Sigmoid colon (tissue), 7 donors: ENCODE measurements at regions of chr18 and their contacts with region 1.

Region 1: DNA sequence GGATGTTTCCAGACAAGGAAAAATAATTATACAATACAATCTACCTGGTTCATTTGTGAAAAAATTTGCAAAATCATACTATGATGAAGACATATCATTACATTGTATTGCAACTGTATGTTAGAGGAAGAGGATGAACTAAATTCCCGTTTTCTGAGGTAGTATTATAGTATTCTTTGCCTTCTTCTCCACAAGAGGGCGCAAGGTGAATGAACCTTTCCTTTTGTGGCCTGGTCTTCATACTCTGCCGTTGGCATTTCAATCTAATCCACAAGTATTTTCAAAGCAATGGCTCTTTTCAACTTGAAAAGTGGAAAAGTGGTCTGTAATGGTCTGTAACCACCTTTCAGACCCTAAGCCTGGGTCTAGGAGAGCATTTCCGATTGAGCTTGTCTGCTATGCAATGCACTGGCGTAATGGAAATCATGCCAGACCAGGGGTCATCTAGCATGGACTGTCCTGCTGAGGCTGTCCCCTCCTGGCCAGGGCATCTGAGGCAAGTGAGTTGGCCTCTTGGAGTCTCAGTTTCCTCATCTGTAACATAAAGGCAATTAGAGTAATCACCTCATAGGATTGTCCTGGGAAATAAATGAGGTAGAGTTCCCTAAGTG is 30.8 kb upstream of the ZNF396 start:
- DNase-seq: no peak
- H3K4me3 ChIP-seq: no peak overlapping the region
- H3K27ac ChIP-seq: no peak overlapping the region
- H3K4me1 ChIP-seq: peaks cover 0 to 4% (median 1%) of the 10 kb centered on the region in 4 donors
- H3K27me3 ChIP-seq: no peaks in the 10 kb centered on the region
- CTCF ChIP-seq: peak in 3 of 4 experiments; percentile 43 to 72 (median 57)
- EP300 ChIP-seq: no peak
- POLR2A ChIP-seq: no peak

Region 2: GRCh38 chr18:35311476-35311875 is 96.5 kb before region 1 on chr18:
- intact Hi-C with region 1: no loop called
- DNase-seq: no peak
- H3K4me3 ChIP-seq: no peak overlapping the region
- H3K27ac ChIP-seq: no peak overlapping the region
- H3K4me1 ChIP-seq: peaks cover 0 to 3% (median 0%) of the 10 kb centered on the region in 4 donors
- H3K27me3 ChIP-seq: no peaks in the 10 kb centered on the region
- CTCF ChIP-seq: no peak
- EP300 ChIP-seq: no peak
- POLR2A ChIP-seq: no peak

Region 3: GRCh38 chr18:35389095-35389618 is 18.8 kb before region 1 on chr18:
- intact Hi-C with region 1: no loop called
- DNase-seq: no peak
- H3K4me3 ChIP-seq: no peak overlapping the region
- H3K27ac ChIP-seq: peak overlapping the region in 2 of 4 donors; percentile 43 to 58
- H3K4me1 ChIP-seq: peaks cover 0 to 8% (median 2%) of the 10 kb centered on the region in 4 donors
- H3K27me3 ChIP-seq: no peaks in the 10 kb centered on the region
- CTCF ChIP-seq: no peak
- EP300 ChIP-seq: no peak
- POLR2A ChIP-seq: no peak

Region 4: DNA sequence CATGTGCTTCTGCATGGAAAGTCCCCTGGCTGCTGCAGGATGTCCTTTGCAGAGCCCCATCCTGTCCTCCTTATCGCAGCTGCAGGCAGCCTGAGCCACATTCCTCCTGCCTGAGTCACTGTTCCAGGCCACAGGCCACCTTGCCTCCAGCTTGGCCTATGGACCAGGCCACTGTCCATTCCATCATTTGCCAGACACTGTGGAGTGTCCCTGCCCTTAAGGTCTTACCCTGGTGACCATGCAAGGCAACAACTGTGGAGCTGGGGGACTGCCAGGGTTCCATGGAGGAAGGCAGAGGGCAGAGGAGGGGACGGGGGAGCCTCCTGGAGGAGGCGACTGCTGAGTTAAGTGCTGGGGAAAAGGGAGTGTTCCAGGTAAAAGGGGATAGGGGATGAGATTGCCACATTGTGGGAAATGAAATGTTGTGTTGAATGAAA is 51.0 kb after region 1 on chr18:
- intact Hi-C with region 1: loop called (anchors 10 kb)
- DNase-seq: peak; percentile 74
- H3K4me3 ChIP-seq: no peak overlapping the region
- H3K27ac ChIP-seq: peak overlapping the region; percentile 39 to 70 (median 63)
- H3K4me1 ChIP-seq: peaks cover 0 to 66% (median 37%) of the 10 kb centered on the region in 4 donors
- H3K27me3 ChIP-seq: no peaks in the 10 kb centered on the region
- CTCF ChIP-seq: no peak
- EP300 ChIP-seq: no peak
- POLR2A ChIP-seq: no peak

Region 5: GRCh38 chr18:35497370-35498197 is 89.6 kb after region 1 on chr18 and contains the start of gene INO80C:
- intact Hi-C with region 1: loop called (anchors 5 kb)
- DNase-seq: peak; percentile 95
- H3K4me3 ChIP-seq: peak within 1 kb of the TSS; percentile 55 to 74 (median 63)
- H3K27ac ChIP-seq: peak within 1 kb of the TSS; percentile 87 to 95 (median 92)
- H3K4me1 ChIP-seq: peaks cover 4 to 39% (median 19%) of the 10 kb centered on the region in 4 donors
- H3K27me3 ChIP-seq: no peaks in the 10 kb centered on the region
- CTCF ChIP-seq: no peak
- EP300 ChIP-seq: no peak
- POLR2A ChIP-seq: peak; percentile 61 to 90
- total RNA-seq, gene INO80C: 3.7 to 25.5 (median 5.2) TPM